BJ (cell line): ENCODE measurements at regions of chr17 and their contacts with region 1.

Region 1: DNA sequence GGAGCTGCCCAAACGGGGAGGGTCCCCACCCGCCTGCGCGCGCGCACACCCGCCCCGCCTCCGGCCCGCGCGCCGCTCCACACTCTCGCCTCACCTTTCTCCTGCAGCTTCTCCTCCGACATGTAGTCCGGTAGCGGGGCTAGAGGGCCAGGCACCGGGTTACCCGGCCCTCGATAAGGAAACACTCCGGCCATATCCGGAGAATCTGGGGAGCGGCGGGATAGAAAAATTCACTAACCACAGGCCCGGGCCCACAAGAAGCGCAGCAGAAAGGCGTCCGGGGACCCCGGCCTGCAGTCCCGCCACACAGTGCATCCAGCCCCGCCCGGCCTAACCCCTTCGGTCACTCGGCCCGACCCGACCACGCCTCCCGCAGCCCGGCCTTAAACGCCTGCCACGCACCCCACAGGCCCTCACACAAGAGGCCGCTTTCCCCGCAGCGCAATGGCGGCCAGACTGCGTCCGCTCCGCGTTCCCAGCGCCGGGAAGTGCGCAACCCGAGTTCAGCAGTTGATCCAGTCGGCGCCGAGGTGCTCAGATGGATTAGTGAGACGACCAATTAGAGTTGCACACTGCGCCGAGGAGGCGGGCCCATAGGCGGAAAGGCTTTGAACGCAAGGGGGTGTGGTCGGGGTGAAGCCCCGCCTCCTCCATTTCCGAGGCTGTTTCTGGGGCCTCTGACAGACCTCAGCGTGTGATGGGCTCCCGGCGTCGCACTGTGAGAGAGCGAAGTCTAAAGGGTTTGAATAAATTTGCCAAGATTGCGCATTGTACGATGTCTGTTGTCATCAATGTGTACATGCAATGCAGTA is at the start of gene PRPF8:
- DNase-seq: peak; percentile 87
- H3K4me3 ChIP-seq: peak within 1 kb of the TSS; percentile 97
- H3K27me3 ChIP-seq: no peaks in the 10 kb centered on the region
- CTCF ChIP-seq: no peak
- polyA plus RNA-seq, gene PRPF8: 113 and 194 TPM in 2 replicates

Region 2: GRCh38 chr17:1474402-1475189 is 210.0 kb before region 1 on chr17:
- CTCF ChIA-PET with region 1: no interaction called
- POLR2A ChIA-PET with region 1: no interaction called
- DNase-seq: no peak
- H3K4me3 ChIP-seq: no peak overlapping the region
- H3K27me3 ChIP-seq: no peaks in the 10 kb centered on the region
- CTCF ChIP-seq: no peak

Region 3: GRCh38 chr17:1516388-1517161 is 168.0 kb before region 1 on chr17 and contains the start of gene INPP5K:
- CTCF ChIA-PET with region 1: no interaction called
- POLR2A ChIA-PET with region 1: no interaction called
- DNase-seq: peak; percentile 86
- H3K4me3 ChIP-seq: peak within 1 kb of the TSS; percentile 98
- H3K27me3 ChIP-seq: no peaks in the 10 kb centered on the region
- CTCF ChIP-seq: no peak
- polyA plus RNA-seq, gene INPP5K: 43.9 and 45.3 TPM in 2 replicates

Region 4: DNA sequence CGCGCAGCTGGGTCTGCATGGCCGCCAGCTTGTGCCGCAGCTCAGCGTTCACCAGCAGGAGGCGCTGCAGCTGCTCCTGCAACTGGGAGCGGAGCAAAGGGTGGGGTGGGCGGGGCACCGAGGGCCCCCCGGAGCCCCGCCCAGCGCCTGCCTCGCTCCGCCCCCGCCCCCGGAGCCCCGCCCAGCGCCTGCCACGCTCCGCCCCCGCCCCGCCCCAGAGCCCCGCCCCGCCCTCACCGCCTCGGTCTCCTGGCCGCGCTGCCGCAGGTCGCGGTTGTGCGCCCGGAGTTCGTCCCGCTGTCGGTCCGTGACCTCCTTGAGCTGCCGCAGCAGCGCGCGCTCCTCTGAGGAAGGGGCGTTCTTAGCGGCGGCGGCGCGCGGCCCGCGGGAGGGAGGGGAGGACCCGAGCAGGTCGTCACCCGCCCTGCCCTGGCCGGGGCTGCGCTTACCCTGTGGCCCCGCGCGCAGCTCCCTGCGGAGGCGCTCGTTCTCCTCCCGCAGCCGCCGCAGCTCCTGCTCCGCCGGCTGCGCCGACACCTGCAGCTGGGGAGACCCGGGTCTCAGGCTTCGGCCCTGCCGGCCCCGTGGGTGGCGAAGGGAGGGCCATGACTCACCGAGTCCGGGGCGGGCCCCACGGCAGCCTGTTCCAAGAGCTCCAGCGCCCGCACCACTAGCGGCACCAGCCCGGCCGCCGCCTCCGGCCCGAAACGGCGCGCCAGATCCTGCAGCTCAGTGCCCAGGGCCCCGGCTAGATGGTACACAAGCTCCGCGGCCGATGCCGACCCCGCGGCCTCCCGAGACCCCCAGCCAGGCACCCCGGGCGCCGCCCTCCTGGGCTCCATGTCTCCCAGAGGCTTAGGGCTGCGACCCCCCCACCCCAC is 35.4 kb before region 1 on chr17:
- CTCF ChIA-PET with region 1: interaction called, 6 read pairs
- POLR2A ChIA-PET with region 1: interaction called, 14 read pairs
- DNase-seq: peak; percentile 67
- H3K4me3 ChIP-seq: peak overlapping the region; percentile 63
- H3K27me3 ChIP-seq: no peaks in the 10 kb centered on the region
- CTCF ChIP-seq: peak; percentile 84

Region 5: GRCh38 chr17:2064980-2065785 is 380.6 kb after region 1 on chr17:
- CTCF ChIA-PET with region 1: no interaction called
- POLR2A ChIA-PET with region 1: no interaction called
- DNase-seq: no peak
- H3K4me3 ChIP-seq: no peak overlapping the region
- H3K27me3 ChIP-seq: no peaks in the 10 kb centered on the region
- CTCF ChIP-seq: peak; percentile 65